Cardiac septum (tissue), 1 donor: ENCODE measurements at regions of chr6 and their contacts with region 1.

Region 1: GRCh38 chr6:132391391-132392271 is 9.6 kb downstream of the MOXD1 start:
- DNase-seq: no peak

Region 2: DNA sequence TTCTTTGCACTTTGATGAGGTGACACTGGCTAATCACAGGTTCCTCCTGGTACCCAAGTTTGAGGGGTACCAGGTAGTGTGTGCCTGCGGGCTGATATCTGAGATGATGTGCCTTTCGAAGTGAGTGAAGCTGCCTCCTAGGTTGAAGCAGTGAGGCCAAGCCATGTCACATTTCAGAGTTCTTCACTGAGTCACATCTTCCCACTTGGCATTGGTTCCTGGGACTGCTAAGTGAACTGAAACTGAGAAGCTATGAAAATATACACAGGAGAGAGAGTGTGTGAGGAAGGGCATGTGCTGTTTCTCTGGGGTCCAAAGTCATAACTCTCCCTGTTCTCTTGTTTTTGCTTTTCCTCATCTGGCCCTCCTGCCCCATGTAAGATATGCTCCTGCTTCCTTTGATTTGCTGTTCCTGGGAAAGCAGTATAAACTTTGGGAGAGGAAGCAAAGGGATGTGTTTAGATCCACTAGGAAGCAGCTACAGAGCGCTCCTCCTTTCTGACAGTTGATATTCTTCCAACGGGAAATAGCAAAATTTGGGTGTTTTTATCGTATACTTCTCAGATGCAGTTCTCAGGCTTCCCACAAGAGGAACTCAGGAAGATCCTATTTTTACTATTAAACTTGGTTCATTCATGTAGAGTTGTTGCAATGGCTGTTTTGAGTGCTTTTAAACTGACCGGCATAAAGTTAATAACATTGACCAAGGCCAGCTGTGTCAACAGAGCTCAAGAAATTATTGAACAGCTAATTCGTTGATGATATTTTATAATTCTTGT is 144.1 kb before region 1 on chr6:
- intact Hi-C with region 1: no loop called
- DNase-seq: no peak

Region 3: DNA sequence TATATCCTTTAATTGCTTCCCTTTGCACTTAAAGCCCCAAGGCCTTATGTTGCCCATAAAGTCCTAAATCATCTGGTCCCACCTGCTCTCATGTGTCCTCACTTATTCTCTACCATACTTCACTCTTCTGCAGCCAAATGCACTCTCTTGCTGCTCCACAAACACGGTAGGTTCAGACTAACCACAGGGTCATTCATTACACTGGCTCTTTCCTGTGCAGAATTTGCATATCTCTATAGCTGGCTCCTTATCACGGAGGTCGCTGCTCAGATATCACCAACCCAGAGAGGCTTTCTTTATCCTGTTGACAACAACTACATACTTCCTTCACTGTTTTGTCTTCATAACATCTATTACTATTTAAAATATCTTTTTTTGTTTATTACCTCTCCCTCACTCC is 77.2 kb before region 1 on chr6:
- intact Hi-C with region 1: loop called (anchors 10 kb)
- DNase-seq: no peak

Region 4: DNA sequence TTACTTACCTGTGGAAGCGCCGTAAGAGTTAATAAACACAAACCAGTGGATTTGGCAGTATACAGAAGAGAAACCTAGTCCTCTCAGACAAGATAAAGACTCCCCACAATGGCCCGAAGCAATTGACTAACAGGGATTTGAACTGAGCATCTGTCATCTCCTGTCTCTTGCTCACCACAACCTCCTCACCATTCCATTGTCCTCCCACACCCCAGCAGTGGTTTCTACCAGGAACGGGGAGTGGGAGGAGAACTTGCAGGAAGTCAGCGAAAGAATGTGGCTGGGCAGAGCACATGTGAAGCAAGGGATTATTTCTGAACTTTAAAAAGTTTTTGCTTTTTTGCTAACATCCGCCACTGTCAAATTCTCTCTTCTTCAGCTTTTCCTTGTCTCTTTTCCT is 291.9 kb after region 1 on chr6:
- intact Hi-C with region 1: no loop called
- DNase-seq: no peak